ENCODE measurements at regions of chr15 and their contacts with region 1.

Region 1: GRCh38 chr15:40857601-40858341 is 13.9 kb downstream of the SPINT1 start:
- DNase-seq: peak; percentile 57 to 73
- ATAC-seq: peak; percentile 75 to 89 (median 84)
- H3K4me3 ChIP-seq: no peak overlapping the region
- H3K27ac ChIP-seq: no peak overlapping the region
- H3K4me1 ChIP-seq: peaks cover 0 to 20% (median 0%) of the 10 kb centered on the region in 9 donors
- H3K27me3 ChIP-seq: peaks cover 0 to 19% (median 0%) of the 10 kb centered on the region in 7 donors
- CTCF ChIP-seq: peak; percentile 86 to 95 (median 93)

Region 2: GRCh38 chr15:40886586-40886985 is 28.8 kb after region 1 on chr15:
- intact Hi-C with region 1: loop called in 5 of 10 experiments (anchors 1 to 5 kb)
- DNase-seq: no peak
- ATAC-seq: no peak
- H3K4me3 ChIP-seq: no peak overlapping the region
- H3K27ac ChIP-seq: no peak overlapping the region
- H3K4me1 ChIP-seq: no peaks in the 10 kb centered on the region
- H3K27me3 ChIP-seq: no peaks in the 10 kb centered on the region
- CTCF ChIP-seq: no peak

Region 3: GRCh38 chr15:40968290-40969085 is 110.7 kb after region 1 on chr15:
- intact Hi-C with region 1: no loop called
- DNase-seq: no peak
- ATAC-seq: no peak
- H3K4me3 ChIP-seq: no peak overlapping the region
- H3K27ac ChIP-seq: no peak overlapping the region
- H3K4me1 ChIP-seq: peaks cover 0 to 20% (median 8%) of the 10 kb centered on the region in 9 donors
- H3K27me3 ChIP-seq: no peaks in the 10 kb centered on the region
- CTCF ChIP-seq: no peak